ENCODE measurements at regions of chr2 and their contacts with region 1.

Region 1: GRCh38 chr2:44244129-44244871 is 31.0 kb upstream of the SLC3A1 start:
- DNase-seq: peak; percentile 68
- ATAC-seq: peak; percentile 75
- H3K4me3 ChIP-seq: no peak overlapping the region
- H3K27ac ChIP-seq: no peak overlapping the region
- H3K4me1 ChIP-seq: no peaks in the 10 kb centered on the region
- H3K27me3 ChIP-seq: no peaks in the 10 kb centered on the region; the same call in 1 of the 2 replicates
- CTCF ChIP-seq: peak; percentile 54
- POLR2A ChIP-seq: no peak
- RAD21 ChIP-seq: peak; percentile 50

Region 2: GRCh38 chr2:43877782-43878464 is 366.4 kb before region 1 on chr2:
- CTCF ChIA-PET with region 1: no interaction called
- POLR2A ChIA-PET with region 1: no interaction called
- dilution Hi-C with region 1: no loop called
- in situ Hi-C with region 1: no loop called
- intact Hi-C with region 1: loop called (anchors 5 kb)
- DNase-seq: peak; percentile 56
- ATAC-seq: peak; percentile 88
- H3K4me3 ChIP-seq: no peak overlapping the region
- H3K27ac ChIP-seq: no peak overlapping the region
- H3K4me1 ChIP-seq: peaks cover 4% of the 10 kb centered on the region
- H3K27me3 ChIP-seq: peaks cover 24% of the 10 kb centered on the region
- CTCF ChIP-seq: peak; percentile 93
- POLR2A ChIP-seq: no peak
- RAD21 ChIP-seq: peak; percentile 85

Region 3: DNA sequence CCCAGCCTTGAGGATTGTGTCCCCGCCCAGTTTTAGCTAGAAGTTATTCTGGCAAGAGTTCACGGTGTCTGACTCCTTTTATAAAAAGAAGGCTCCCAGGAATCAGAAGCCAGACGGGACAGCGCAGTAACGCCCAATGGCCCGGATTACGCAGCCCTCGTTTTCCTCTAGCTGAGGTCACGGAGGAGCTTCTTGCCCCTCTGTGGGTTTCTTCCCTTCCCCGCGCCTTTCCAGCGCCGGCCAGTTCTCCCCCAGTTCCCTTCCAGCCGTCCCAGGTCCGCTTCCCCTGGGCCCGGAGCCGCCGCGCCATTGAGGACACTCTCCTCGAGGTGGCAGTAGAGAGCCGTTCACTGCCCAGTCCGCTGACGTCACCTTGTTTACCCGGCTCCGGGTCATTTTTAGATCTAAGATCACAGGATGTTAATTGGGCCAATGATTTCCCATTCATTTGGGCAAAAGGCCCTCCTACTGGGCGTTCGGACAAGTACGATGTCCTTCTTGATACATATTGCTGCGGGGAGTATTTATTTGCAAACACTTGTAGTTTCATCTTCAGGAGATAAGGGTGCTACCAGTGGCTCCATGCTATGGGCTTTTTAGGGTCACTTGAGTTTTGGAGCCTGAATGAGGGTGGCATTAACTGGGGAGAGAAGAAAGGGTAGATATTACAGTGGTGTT is 157.1 kb before region 1 on chr2:
- CTCF ChIA-PET with region 1: interaction called, 3 read pairs
- POLR2A ChIA-PET with region 1: no interaction called
- dilution Hi-C with region 1: no loop called
- in situ Hi-C with region 1: no loop called
- intact Hi-C with region 1: loop called (anchors 1 kb)
- DNase-seq: peak; percentile 61
- ATAC-seq: peak; percentile 99
- H3K4me3 ChIP-seq: peak overlapping the region; percentile 44
- H3K27ac ChIP-seq: no peak overlapping the region
- H3K4me1 ChIP-seq: peaks cover 2% of the 10 kb centered on the region; the same call in 1 of the 2 replicates
- H3K27me3 ChIP-seq: peaks cover 4% of the 10 kb centered on the region
- CTCF ChIP-seq: peak; percentile 96
- POLR2A ChIP-seq: no peak
- RAD21 ChIP-seq: peak; percentile 93

Region 4: GRCh38 chr2:44098050-44098449 is 146.2 kb before region 1 on chr2:
- CTCF ChIA-PET with region 1: no interaction called
- POLR2A ChIA-PET with region 1: no interaction called
- dilution Hi-C with region 1: no loop called
- in situ Hi-C with region 1: no loop called
- intact Hi-C with region 1: no loop called
- DNase-seq: no peak
- ATAC-seq: no peak
- H3K4me3 ChIP-seq: no peak overlapping the region
- H3K27ac ChIP-seq: no peak overlapping the region
- H3K4me1 ChIP-seq: peaks cover 5% of the 10 kb centered on the region; the same call in 1 of the 2 replicates
- H3K27me3 ChIP-seq: no peaks in the 10 kb centered on the region
- CTCF ChIP-seq: no peak
- POLR2A ChIP-seq: no peak
- RAD21 ChIP-seq: no peak

Region 5: GRCh38 chr2:44291281-44292248 is 47.3 kb after region 1 on chr2:
- CTCF ChIA-PET with region 1: interaction called, 10 read pairs
- POLR2A ChIA-PET with region 1: no interaction called
- dilution Hi-C with region 1: no loop called
- in situ Hi-C with region 1: no loop called
- intact Hi-C with region 1: loop called (anchors 1 kb)
- DNase-seq: peak; percentile 75
- ATAC-seq: peak; percentile 95
- H3K4me3 ChIP-seq: no peak overlapping the region
- H3K27ac ChIP-seq: no peak overlapping the region
- H3K4me1 ChIP-seq: peaks cover 7% of the 10 kb centered on the region
- H3K27me3 ChIP-seq: peaks cover 20% of the 10 kb centered on the region
- CTCF ChIP-seq: peak; percentile 74
- POLR2A ChIP-seq: no peak
- RAD21 ChIP-seq: peak; percentile 79

Region 6: DNA sequence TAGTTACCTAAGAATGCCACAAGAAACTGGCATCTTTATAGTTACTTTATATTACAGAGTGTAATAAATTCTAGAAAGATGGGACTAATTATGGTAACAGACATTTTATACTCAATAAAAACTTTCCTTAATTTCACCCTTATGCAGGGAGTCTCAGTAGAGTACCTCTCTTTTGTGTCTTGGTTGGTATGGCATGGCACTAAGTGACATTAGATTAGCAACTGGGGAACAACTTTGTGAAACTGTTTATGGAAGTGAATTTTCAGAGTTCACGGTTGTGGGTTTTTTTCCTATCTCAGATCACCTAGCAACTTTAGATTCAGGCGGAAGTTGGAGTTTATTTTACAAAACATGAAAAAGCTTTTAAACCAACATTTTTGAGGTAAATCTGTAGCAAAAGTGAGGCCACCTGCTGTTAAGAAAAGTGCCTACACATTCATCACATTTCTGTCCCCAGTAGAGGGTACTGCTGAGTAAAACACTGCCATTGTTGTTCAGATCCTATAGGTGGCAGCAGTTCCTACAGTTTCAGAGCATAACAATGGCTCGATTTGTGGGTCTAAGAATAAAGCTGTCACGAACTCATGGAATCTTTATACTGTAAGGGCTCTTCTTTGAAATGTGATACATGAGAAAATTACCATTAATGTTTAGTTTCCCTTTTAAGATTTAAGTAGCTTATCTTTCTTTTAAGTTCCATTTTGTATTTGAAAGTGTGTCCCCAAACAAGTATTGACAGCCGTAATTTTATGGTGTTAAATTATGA is 235.0 kb after region 1 on chr2:
- CTCF ChIA-PET with region 1: no interaction called
- POLR2A ChIA-PET with region 1: no interaction called
- dilution Hi-C with region 1: no loop called
- in situ Hi-C with region 1: no loop called
- intact Hi-C with region 1: loop called (anchors 5 kb)
- DNase-seq: peak; percentile 87
- ATAC-seq: peak; percentile 100
- H3K4me3 ChIP-seq: no peak overlapping the region
- H3K27ac ChIP-seq: no peak overlapping the region
- H3K4me1 ChIP-seq: no peaks in the 10 kb centered on the region
- H3K27me3 ChIP-seq: no peaks in the 10 kb centered on the region
- CTCF ChIP-seq: peak; percentile 100; the same call in 1 of the 2 replicates
- POLR2A ChIP-seq: no peak
- RAD21 ChIP-seq: peak; percentile 90

Region 7: GRCh38 chr2:44649381-44649780 is 405.1 kb after region 1 on chr2:
- CTCF ChIA-PET with region 1: no interaction called
- POLR2A ChIA-PET with region 1: no interaction called
- dilution Hi-C with region 1: no loop called
- in situ Hi-C with region 1: no loop called
- intact Hi-C with region 1: no loop called
- DNase-seq: no peak
- ATAC-seq: no peak
- H3K4me3 ChIP-seq: no peak overlapping the region
- H3K27ac ChIP-seq: no peak overlapping the region
- H3K4me1 ChIP-seq: no peaks in the 10 kb centered on the region
- H3K27me3 ChIP-seq: peaks cover 3% of the 10 kb centered on the region; the same call in 1 of the 2 replicates
- CTCF ChIP-seq: no peak
- POLR2A ChIP-seq: no peak
- RAD21 ChIP-seq: no peak

Region 8: GRCh38 chr2:44955593-44956392 is 711.5 kb after region 1 on chr2:
- CTCF ChIA-PET with region 1: no interaction called
- POLR2A ChIA-PET with region 1: no interaction called
- dilution Hi-C with region 1: no loop called
- in situ Hi-C with region 1: no loop called
- intact Hi-C with region 1: loop called (anchors 1 kb)
- DNase-seq: peak; percentile 56
- ATAC-seq: peak; percentile 78
- H3K4me3 ChIP-seq: no peak overlapping the region
- H3K27ac ChIP-seq: no peak overlapping the region
- H3K4me1 ChIP-seq: no peaks in the 10 kb centered on the region
- H3K27me3 ChIP-seq: peaks cover 52% of the 10 kb centered on the region
- CTCF ChIP-seq: peak; percentile 94
- POLR2A ChIP-seq: no peak
- RAD21 ChIP-seq: peak; percentile 89